Activated naive CD4-positive, alpha-beta T cell treated with anti-CD3 and anti-CD28 coated beads, Interleukin-2, amount 10 ng/mL, durations not matched to agents 7 days and 5 days (primary cell): ENCODE measurements at regions of chr5 and their contacts with region 1.

Region 1: GRCh38 chr5:149608526-149608880 is 27.2 kb downstream of the ARHGEF37 start:
- DNase-seq: no peak
- H3K4me3 Mint-ChIP-seq: no peak overlapping the region
- H3K27ac Mint-ChIP-seq: no peak overlapping the region
- H3K4me1 Mint-ChIP-seq: peaks cover 16% of the 10 kb centered on the region
- H3K27me3 Mint-ChIP-seq: peaks cover 4% of the 10 kb centered on the region

Region 2: DNA sequence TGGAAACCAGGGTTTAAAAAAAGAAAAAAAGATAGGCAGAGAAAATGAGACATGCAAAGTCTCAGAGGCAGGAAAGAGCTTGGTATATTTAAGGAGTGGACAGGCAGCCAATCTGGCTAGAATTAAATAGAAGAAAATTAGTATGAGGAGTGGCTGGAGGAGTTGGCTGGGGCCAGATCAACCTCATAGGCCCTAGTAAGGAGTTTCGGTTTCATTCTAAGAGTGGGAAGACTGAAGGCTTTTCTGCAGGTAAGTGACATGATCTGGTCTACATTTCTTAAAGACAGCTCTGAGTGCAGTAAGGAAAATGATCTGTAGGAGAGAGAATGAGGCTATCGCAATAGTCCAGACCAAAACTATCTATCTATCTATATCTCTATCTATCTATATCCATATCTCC is 754.6 kb before region 1 on chr5:
- CTCF ChIA-PET with region 1: no interaction called
- DNase-seq: no peak
- H3K4me3 Mint-ChIP-seq: no peak overlapping the region
- H3K27ac Mint-ChIP-seq: no peak overlapping the region
- H3K4me1 Mint-ChIP-seq: peaks cover 35% of the 10 kb centered on the region
- H3K27me3 Mint-ChIP-seq: peaks cover 6% of the 10 kb centered on the region

Region 3: GRCh38 chr5:149618581-149619251 is 10.2 kb after region 1 on chr5:
- CTCF ChIA-PET with region 1: interaction called, 16 read pairs
- DNase-seq: peak; percentile 48
- H3K4me3 Mint-ChIP-seq: no peak overlapping the region
- H3K27ac Mint-ChIP-seq: no peak overlapping the region
- H3K4me1 Mint-ChIP-seq: no peaks in the 10 kb centered on the region
- H3K27me3 Mint-ChIP-seq: peaks cover 4% of the 10 kb centered on the region